ENCODE measurements at regions of chr6 and their contacts with region 1.

Region 1: GRCh38 chr6:160930547-160931377 is 60.8 kb upstream of the MAP3K4 start:
- DNase-seq: peak; percentile 82
- ATAC-seq: peak; percentile 89

Region 2: GRCh38 chr6:160972111-160972510 is 41.3 kb after region 1 on chr6:
- intact Hi-C with region 1: loop called (anchors 5 kb)
- DNase-seq: no peak
- ATAC-seq: no peak

Region 3: DNA sequence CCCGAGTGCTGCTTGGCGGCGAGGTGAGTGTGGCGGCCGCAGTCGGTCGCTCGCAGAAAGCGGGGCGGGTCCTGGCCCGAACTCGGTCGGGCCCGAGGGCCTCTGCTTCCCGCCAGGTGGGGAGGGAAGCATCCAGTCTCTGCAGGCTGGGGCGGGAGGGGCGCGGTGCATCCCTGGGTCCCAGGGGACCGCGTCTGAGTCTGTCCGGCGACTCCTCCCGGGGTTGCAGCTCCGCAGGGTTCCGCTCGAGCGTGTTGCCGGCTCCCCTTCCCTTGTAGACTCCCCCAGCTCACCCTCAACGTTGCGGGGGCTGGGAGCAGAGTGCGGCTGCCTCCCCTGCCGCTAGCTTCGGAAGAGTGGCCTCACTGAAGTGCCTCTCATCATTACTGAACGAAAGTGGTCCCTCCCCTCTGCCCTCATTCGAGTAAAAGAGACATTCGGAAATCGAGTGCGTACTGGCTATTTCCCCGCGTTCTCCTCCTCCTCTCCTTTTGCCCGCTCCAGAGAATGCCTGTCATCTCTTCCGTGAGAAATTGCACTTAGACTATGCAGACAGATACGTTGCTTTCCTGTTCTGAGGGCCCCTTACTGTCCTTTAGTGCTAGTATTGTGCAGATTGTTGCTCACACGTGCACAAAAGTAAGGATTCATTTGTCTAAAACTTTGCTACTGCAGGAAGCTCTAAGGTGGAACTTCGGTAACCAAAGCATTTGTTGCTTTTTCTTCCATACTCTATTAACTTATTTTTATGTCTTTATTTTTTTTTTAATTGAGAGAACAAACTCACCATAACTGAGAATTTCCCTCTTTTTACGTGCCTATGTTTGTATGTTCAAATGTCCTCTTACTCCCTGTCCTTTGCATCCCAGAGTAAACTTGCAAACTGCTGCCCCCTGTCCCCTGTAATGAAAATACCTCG is 61.6 kb after region 1 on chr6:
- intact Hi-C with region 1: loop called (anchors 1 kb)
- DNase-seq: no peak
- ATAC-seq: peak; percentile 67

Region 4: GRCh38 chr6:161011492-161012480 is 81.0 kb after region 1 on chr6:
- intact Hi-C with region 1: no loop called
- DNase-seq: no peak
- ATAC-seq: peak; percentile 76

Region 5: GRCh38 chr6:161079566-161080262 is 149.0 kb after region 1 on chr6:
- intact Hi-C with region 1: loop called (anchors 10 kb)
- DNase-seq: no peak
- ATAC-seq: no peak

Region 6: DNA sequence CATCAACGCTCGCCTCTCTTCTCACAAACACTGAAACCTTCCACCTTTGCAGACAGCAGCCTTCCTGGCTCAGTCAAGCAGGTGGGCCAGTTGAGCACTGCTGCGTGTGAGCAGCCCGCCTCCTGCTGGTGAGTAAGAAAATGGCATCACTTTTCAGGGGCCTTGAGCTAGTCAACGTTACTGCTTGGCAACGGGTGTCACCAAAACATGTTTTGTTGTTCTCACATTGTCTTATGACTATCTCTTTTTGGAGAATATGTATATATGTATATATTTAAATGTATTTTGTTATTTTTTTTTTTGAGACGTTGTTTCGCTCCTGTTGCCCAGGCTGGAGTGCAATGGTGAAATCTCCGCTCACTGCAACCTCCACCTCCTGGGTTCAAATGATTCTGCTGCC is 440.1 kb after region 1 on chr6:
- intact Hi-C with region 1: loop called (anchors 2 kb)
- DNase-seq: no peak
- ATAC-seq: no peak